ENCODE measurements at regions of chr4 and their contacts with region 1.

Region 1: GRCh38 chr4:113547487-113548042 is 214.0 kb downstream of the CAMK2D start:
- DNase-seq: peak; percentile 75
- CTCF ChIP-seq: peak; percentile 88

Region 2: DNA sequence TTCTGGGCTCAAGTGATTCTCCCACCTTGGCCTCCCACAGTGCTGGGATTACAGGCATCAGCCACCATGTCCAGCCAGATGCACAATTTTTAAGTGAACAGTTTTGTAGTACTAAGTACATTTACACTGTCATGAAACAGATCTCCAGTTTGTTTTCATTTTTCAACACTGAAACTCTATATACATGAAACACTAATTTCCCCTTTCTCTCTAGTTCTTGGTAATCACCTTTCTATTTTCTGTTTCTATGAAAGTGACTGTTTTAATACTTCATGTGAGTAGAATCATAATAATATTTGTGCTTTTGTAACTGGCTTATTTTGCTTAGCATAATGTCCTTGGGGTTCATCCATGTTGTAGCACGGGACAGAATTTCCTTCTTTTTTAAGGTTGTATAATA is 23.5 kb before region 1 on chr4:
- CTCF ChIA-PET with region 1: interaction called, 12 read pairs
- POLR2A ChIA-PET with region 1: no interaction called
- DNase-seq: peak; percentile 20
- CTCF ChIP-seq: no peak

Region 3: DNA sequence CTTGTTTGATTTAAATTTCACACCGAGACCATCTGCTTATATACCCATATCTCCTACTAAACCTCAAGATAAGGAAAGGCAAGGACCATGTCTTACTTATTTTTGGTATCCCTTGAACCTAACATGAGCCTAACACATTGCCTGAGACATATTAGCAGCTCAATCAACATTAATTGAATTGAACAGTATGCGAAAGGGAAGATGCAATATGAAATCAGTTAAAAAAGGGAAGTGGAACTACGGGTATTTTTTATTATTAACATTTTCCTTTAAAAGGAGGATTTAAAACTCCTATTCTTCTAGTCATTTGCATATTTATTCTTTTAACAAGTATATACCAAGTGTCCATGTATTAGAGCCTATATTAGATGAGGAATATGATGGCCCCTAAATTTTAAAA is 16.9 kb after region 1 on chr4:
- CTCF ChIA-PET with region 1: interaction called, 67 read pairs
- POLR2A ChIA-PET with region 1: no interaction called
- DNase-seq: no peak
- CTCF ChIP-seq: no peak

Region 4: DNA sequence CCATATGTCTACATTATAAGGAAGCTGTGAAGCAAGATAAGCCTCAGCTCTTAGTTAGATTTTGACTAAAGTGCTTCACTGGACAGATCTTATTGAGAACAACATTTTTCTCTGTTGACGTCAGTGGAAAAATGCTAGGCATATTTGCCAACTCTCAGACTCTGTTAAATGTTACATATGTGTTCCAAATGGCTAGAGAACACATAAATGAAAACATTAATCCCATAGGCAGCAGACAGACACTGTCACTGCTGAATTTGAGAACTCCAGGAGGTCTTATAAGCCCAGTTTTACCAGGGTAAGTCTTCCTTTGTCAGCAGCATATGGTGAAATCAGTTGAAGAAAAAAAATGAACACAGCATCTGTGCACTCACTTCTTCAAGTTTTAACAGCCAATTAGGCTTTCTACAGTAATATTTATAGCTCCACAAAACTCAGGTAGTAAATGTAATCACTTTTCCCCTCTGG is 27.1 kb after region 1 on chr4:
- CTCF ChIA-PET with region 1: interaction called, 12 read pairs
- POLR2A ChIA-PET with region 1: no interaction called
- DNase-seq: no peak
- CTCF ChIP-seq: no peak

Region 5: DNA sequence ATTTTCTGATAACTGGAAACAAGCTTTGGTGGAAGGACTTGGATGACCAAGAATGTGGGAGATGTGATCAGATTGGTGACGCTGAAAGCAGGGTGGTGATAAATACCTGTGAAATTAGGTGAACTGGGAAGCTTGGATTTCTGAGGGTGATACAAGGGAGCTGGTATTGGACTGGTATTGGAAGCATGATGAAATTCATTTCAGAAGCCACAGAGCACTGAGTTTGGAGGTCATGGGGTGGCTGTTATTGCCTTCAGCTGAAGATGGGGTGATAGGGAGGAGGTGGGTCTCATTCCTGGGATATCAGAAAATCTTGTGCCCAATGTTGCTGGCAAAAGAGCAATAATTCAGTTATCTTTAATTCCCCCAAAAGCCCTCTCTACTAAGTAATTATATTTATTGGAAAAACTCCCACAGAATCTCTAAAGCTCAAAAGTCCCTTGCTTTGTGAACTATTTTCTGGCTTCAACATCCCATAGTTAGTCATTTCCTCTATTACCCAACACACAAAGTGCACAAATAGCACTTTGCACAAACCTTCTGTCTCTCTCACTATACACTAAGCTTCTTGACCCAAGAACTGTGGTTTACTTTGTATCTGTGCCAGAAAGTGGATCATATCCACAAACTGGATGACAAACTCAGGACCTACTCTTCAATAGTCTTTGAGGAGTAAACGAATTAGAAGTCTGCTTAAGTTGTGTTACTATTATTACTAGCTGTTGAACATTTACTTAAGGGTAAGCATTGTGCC is 237.1 kb after region 1 on chr4:
- CTCF ChIA-PET with region 1: no interaction called
- POLR2A ChIA-PET with region 1: no interaction called
- DNase-seq: no peak
- CTCF ChIP-seq: no peak

Measured in GM10248 (cell line).